ENCODE measurements at regions of chr1 and their contacts with region 1.

Region 1: GRCh38 chr1:27300341-27301051 is 21.5 kb upstream of the TMEM222 start:
- DNase-seq: peak in 1 of 2 experiments; percentile 90
- H3K4me3 ChIP-seq: no peak overlapping the region
- H3K27ac ChIP-seq: no peak overlapping the region
- H3K4me1 ChIP-seq: peaks cover 0 to 22% (median 11%) of the 10 kb centered on the region in 4 experiments; a peak in 6 of 7 replicates
- H3K27me3 ChIP-seq: no peaks in the 10 kb centered on the region
- CTCF ChIP-seq: peak; percentile 97 to 99 (median 99)
- EP300 ChIP-seq: no peak
- POLR2A ChIP-seq: no peak
- RAD21 ChIP-seq: peak; percentile 99 to 100

Region 2: DNA sequence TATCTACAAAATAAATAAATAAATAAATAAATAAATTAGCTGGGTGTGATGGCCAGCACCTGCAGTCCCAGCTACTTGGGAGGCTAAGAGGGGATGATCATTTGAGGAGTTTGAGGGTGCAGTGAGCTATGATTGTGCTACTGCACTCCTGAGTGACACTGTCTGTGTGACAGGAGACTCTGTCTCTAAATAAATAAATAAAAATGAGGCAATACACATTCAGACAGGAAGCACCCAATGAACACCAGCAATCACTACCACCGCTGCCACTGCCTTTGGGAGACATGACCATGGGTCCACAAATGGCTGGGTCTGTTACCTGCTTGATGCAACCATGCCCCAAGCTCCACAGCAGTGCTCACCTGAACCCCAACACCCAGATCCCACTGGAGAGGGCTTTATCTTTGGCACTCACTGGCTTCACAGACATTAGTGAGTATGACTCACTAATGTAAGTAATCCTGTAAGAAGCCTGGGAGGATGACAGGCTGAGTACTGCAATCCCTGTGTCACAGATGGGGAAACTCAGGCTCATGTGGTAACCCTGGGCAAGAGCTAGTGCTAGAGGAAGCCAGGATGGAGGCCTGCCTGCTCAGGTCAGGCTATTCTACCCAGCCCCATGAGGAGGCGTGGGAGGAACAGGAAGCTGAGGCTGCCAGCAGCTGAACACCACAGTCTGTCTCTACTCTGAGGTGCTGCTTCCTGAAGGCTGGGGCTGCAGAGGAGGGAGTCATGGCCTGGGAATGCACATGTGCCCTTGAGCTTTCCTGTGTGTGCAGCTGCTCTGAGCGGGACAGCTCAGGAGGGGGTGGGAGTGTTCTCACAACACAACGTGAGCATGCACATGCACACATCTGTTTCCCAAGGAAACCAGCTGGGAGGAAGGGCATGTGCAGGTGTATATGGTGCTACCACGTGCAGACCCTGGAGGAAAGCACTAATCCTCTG is 188.6 kb before region 1 on chr1:
- CTCF ChIA-PET with region 1: interaction called, 131 read pairs
- POLR2A ChIA-PET with region 1: no interaction called
- DNase-seq: no peak
- H3K4me3 ChIP-seq: no peak overlapping the region
- H3K27ac ChIP-seq: no peak overlapping the region
- H3K4me1 ChIP-seq: no peaks in the 10 kb centered on the region
- H3K27me3 ChIP-seq: no peaks in the 10 kb centered on the region
- CTCF ChIP-seq: peak in 1 of 3 experiments; percentile 20; a peak in 2 of 4 replicates
- EP300 ChIP-seq: no peak
- POLR2A ChIP-seq: no peak
- RAD21 ChIP-seq: peak in 1 of 2 experiments; percentile 43; a peak in 1 of 4 replicates

Region 3: GRCh38 chr1:27321813-27322577 is 21.5 kb after region 1 on chr1 and contains the start of gene TMEM222:
- CTCF ChIA-PET with region 1: interaction called, 202 read pairs
- POLR2A ChIA-PET with region 1: interaction called, 4 read pairs
- DNase-seq: peak; percentile 88 to 99
- H3K4me3 ChIP-seq: peak within 1 kb of the TSS; percentile 78 to 100 (median 98)
- H3K27ac ChIP-seq: peak within 1 kb of the TSS; percentile 86
- H3K4me1 ChIP-seq: 0 out of 7 replicates have a peak, but pooled peaks cover 0 to 8% (median 0%) of the 10 kb centered on the region in 4 experiments
- H3K27me3 ChIP-seq: no peaks in the 10 kb centered on the region; a peak in 2 of 7 replicates
- CTCF ChIP-seq: peak in 2 of 3 experiments; percentile 1 to 14; a peak in 2 of 4 replicates
- EP300 ChIP-seq: peak; percentile 16 to 83; a peak in 2 of 3 replicates
- POLR2A ChIP-seq: peak; percentile 69 to 87
- RAD21 ChIP-seq: peak; percentile 7 to 30; a peak in 3 of 4 replicates
- total RNA-seq, gene TMEM222: 25.1 and 27.0 TPM in 2 replicates

Region 4: DNA sequence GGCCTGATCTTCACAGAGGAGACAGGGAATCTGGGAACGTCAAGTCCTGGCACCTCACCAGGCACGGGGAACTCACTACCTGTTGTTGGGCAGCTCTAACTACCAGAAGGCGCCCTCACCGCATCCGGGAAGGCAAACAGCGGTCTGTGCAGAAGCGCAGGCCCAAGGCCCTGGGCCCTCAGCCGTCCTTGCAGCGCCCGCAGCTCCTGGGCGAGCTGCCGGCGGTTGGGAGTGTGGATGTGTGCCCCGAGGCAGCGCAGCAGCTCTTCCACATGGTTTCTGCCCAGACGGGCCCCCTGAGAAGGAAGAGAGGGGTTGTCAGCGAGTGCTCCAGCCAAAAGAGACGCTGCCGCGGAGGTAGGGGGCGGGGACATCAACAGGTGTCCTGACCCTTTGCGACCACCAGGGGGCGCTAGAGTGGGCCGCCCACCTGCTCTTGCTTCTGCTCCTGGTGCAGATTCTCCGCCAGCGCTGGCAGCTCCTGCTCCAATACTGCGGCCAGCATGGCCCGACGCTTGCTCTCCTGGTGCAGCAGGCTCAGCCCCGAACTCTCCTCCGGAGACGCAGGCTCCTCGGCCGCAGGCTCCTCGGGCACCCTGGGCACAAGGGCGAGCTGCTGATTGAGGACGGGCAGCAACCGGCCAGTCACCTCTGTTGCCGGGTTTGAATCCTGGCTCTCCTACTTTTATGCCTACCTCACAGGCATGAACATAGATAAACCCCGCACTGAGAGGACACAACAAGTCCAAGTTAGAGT is 57.0 kb after region 1 on chr1:
- CTCF ChIA-PET with region 1: interaction called, 238 read pairs
- POLR2A ChIA-PET with region 1: interaction called, 6 read pairs
- DNase-seq: peak; percentile 73 to 94
- H3K4me3 ChIP-seq: peak overlapping the region in 3 of 4 experiments; percentile 13 to 34 (median 28); a peak in 4 of 8 replicates
- H3K27ac ChIP-seq: no peak overlapping the region
- H3K4me1 ChIP-seq: peaks cover 0 to 14% (median 7%) of the 10 kb centered on the region in 4 experiments; a peak in 6 of 7 replicates
- H3K27me3 ChIP-seq: peaks cover 12 to 47% (median 36%) of the 10 kb centered on the region in 4 experiments
- CTCF ChIP-seq: peak in 2 of 3 experiments; percentile 94 to 98; a peak in 3 of 4 replicates
- EP300 ChIP-seq: no peak; a peak in 1 of 3 replicates
- POLR2A ChIP-seq: no peak
- RAD21 ChIP-seq: peak; percentile 60 to 71

Region 5: GRCh38 chr1:27392096-27392777 is 91.7 kb after region 1 on chr1 and contains the start of gene GPR3:
- CTCF ChIA-PET with region 1: interaction called, 300 read pairs
- POLR2A ChIA-PET with region 1: interaction called, 8 read pairs
- DNase-seq: peak; percentile 82 to 97
- H3K4me3 ChIP-seq: peak within 1 kb of the TSS; percentile 61 to 82 (median 70)
- H3K27ac ChIP-seq: peak within 1 kb of the TSS; percentile 45; the same call in 1 of the 2 replicates
- H3K4me1 ChIP-seq: peaks cover 2 to 19% (median 12%) of the 10 kb centered on the region in 4 experiments
- H3K27me3 ChIP-seq: no peaks in the 10 kb centered on the region
- CTCF ChIP-seq: peak in 2 of 3 experiments; percentile 55 to 60; a peak in 3 of 4 replicates
- EP300 ChIP-seq: no peak
- POLR2A ChIP-seq: no peak
- RAD21 ChIP-seq: peak; percentile 16 to 36; a peak in 3 of 4 replicates
- total RNA-seq, gene GPR3: 9.4 and 9.9 TPM in 2 replicates

Region 6: DNA sequence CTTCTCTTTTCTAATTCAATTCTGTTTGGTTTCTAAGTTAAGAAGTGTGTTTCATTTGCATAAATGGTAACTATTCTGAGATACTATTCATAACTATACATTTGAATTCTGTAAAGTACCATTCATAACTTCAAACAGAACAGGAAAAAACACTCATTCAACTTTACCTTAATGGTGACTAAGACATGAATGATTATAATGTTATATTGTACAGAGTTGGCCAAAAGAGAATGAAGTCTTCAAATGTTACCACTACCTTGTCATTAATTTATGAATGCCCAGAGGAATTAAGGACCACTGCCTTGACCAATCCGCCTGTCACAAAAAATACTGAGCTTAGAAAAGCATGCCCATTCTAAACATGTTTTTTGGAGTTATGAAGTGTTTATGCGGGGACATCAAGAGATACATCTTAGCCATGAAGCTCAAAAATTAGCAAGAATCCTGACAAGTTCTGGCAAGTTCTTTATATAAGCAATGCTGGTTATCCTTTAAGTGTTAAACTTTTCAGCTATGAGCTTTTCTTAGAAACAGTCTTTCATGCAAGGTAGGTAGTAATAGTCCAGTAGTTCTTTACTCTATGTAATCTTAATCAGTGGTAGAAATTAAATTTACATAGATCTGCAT is 181.6 kb after region 1 on chr1:
- CTCF ChIA-PET with region 1: no interaction called
- POLR2A ChIA-PET with region 1: no interaction called
- DNase-seq: no peak
- H3K4me3 ChIP-seq: no peak overlapping the region
- H3K27ac ChIP-seq: no peak overlapping the region
- H3K4me1 ChIP-seq: no peaks in the 10 kb centered on the region
- H3K27me3 ChIP-seq: no peaks in the 10 kb centered on the region
- CTCF ChIP-seq: no peak
- EP300 ChIP-seq: no peak
- POLR2A ChIP-seq: no peak
- RAD21 ChIP-seq: no peak

Measured in H1 (cell line).